ENCODE measurements at regions of chr11 and their contacts with region 1.

Region 1: DNA sequence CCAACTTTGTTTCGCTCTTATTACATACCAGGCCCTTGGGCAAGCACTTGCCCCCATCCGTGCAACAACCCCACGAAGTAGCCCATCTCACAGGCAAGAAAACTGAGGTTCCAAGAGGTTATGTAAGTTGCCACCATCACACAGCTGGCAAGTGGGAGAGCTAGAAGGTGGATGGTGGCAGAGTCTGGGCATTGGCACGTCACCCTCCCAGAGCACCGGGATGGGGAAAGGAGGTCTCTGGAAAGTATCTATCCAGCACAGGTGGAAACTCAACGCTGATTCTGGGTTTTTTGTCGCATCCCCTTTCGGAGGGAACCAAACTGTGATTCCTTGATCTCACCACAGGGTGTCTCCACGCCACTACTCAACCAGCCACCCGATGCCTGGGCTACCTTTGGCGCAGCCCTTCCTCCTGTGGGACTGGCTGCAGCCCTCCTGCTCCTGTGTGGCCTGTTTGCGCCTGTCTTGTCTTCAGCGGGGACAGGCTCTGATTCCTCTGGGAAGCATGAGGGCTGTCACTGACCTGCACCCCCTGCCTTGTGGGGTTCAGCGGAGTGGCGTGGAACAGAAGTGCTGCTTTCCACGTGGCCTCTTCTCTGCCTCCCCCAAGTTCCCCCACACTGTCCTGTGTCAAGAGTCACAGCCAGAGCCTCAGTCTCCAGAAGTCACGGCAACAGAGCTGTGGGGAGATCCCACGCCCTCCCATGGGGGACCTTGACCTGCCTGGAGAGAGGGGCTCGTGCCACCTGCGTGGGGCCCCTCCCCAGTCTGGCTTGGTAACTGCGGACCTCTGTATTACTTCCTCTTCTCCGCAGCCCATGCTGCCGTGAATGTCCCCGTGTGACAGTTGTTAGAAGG is 34.4 kb upstream of the TRIM29 start:
- DNase-seq: peak; percentile 64
- H3K4me3 Mint-ChIP-seq: no peak overlapping the region
- H3K27ac Mint-ChIP-seq: no peak overlapping the region
- H3K4me1 Mint-ChIP-seq: no peaks in the 10 kb centered on the region
- H3K27me3 Mint-ChIP-seq: peaks cover 81% of the 10 kb centered on the region
- CTCF ChIP-seq: peak; percentile 49

Region 2: DNA sequence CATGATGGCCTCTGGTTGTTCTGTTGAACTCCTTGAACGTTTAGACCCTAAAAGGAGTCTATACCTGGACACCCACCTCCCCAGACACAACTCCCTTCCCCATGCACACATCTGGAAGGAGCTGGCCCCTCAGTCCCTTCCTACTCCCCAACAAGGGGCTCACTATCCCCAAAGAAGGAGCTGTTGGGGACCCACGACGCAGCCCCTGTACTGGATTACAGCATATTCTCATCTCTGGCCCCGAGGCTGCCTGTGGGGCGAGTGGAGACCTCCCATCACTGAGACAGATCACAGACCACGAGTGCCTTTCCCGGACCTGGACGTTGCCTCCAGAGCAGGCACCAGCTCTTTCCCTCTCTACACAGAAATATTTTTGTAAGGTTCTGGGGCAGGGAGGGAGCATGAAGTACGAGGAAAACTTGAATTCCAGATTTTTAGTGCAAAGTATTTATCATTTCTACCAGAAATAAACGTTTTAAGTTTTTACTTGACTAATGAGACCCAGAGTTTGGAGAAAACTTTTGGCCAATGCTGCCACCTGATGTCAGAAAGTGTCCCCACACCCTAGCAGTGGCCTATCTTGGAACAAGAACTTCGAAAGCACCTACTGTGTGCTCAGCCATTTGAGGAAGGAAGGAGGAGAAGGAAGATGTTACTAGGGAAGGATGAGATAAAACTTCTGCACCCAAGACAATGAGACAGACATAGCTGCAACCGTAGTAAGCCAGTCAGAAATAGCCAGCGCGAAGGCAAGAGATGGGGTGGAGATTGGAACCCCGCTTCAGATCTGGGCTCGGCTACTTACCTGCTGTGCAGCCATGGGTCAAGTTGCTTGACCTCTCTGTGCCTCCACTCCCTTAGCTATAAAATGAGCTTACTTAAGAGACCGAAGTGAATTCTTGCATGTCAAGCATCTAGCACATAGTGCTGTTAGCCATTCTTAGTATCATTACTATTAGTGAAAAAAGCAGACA is 57.5 kb after region 1 on chr11:
- CTCF ChIA-PET with region 1: no interaction called
- intact Hi-C with region 1: loop called (anchors 1 kb)
- DNase-seq: peak; percentile 36
- H3K4me3 Mint-ChIP-seq: no peak overlapping the region
- H3K27ac Mint-ChIP-seq: no peak overlapping the region
- H3K4me1 Mint-ChIP-seq: no peaks in the 10 kb centered on the region
- H3K27me3 Mint-ChIP-seq: peaks cover 30% of the 10 kb centered on the region
- CTCF ChIP-seq: peak; percentile 33

Region 3: DNA sequence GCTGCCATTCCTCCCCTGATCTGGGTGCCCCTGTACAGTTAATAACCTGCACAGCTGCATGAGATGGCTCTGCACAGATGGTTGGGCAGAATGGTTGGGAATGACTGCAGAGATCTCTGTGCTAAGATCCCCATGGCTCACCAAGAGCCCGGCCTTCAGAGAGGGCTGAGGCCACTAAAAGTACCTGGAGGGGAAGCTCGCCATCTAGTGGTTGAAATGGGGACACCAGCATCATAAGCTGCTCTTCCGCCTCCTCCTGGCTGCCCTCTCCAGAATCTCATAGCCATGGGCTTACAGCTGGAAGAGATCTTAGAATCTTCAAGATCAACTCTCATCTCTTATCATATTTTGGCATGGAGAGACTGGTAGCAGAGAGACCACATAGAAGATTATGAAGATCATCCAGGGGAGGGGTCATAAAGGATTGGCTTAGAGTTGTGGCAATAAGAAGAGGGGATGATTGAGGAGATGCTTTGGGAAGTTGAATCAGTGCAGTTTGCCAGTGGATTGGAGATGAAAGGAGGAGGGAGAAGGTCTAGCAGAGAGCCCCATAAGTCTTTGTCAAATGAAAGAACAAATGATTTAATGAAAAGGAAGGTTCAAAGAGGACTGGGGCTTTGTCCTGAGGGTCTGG is 130.8 kb after region 1 on chr11:
- CTCF ChIA-PET with region 1: interaction called, 3 read pairs
- intact Hi-C with region 1: loop called (anchors 1 kb)
- DNase-seq: peak; percentile 59
- H3K4me3 Mint-ChIP-seq: no peak overlapping the region
- H3K27ac Mint-ChIP-seq: peak overlapping the region; percentile 86
- H3K4me1 Mint-ChIP-seq: peaks cover 54% of the 10 kb centered on the region
- H3K27me3 Mint-ChIP-seq: no peaks in the 10 kb centered on the region
- CTCF ChIP-seq: peak; percentile 72

Measured in Calu3 (cell line).